Ovary (tissue), 10 donors: ENCODE measurements at regions of chr5 and their contacts with region 1.

Region 1: DNA sequence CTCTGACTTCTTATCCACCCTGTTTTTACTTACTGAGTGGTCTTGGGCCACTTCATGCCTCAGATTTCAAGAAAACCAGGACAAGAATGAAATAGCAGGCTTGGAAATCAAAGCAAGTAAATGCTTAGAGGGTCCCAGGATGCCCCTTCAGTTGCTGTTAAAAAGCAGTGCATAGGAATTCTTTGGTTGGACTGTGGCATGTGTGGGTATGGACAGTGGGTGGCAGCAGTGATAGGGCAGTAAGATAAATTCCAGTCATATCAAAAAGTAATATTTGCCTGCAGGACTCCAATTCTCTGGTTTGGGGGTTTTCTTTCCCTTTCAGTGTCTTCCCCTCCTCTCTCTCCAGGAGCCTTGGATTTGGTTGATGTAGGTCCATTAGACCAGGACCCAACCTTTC is 306.7 kb upstream of the CLINT1 start:
- DNase-seq: no peak
- H3K4me3 ChIP-seq: no peak overlapping the region
- H3K27ac ChIP-seq: no peak overlapping the region
- H3K4me1 ChIP-seq: no peaks in the 10 kb centered on the region
- H3K27me3 ChIP-seq: no peaks in the 10 kb centered on the region
- CTCF ChIP-seq: no peak
- EP300 ChIP-seq: no peak
- POLR2A ChIP-seq: no peak

Region 2: DNA sequence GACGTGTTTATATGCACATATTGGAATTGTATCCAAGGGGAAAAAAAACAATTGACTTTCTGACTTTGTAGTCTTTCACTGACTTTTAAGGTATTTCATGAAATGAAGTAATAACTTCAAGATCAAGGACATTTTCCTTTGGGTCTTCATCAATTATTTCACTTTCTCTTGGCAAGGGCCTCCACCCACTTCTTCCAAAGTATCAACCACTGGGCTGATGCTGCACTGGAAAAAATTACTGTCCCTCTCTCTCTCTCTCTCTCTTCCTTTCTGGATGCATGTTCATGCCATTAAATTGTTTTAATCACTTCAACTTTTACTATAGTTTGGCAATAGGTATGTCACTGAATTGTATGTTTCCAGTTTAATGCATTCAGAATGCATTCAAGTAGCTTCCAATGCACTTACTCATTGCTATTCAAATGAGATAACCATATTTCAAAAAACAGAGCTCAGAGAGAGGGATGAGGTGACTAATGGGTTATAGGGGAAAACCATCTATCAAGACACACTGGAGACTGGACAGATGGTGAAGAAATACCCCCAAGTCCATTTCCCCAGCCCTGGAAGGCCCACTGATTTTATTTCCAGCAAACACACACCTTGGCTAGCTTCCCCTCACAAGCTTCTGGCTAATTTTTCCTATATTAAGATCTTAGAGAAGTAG is 348.8 kb after region 1 on chr5:
- intact Hi-C with region 1: no loop called
- DNase-seq: no peak
- H3K4me3 ChIP-seq: no peak overlapping the region
- H3K27ac ChIP-seq: no peak overlapping the region
- H3K4me1 ChIP-seq: no peaks in the 10 kb centered on the region
- H3K27me3 ChIP-seq: no peaks in the 10 kb centered on the region
- CTCF ChIP-seq: no peak
- EP300 ChIP-seq: no peak
- POLR2A ChIP-seq: no peak

Region 3: DNA sequence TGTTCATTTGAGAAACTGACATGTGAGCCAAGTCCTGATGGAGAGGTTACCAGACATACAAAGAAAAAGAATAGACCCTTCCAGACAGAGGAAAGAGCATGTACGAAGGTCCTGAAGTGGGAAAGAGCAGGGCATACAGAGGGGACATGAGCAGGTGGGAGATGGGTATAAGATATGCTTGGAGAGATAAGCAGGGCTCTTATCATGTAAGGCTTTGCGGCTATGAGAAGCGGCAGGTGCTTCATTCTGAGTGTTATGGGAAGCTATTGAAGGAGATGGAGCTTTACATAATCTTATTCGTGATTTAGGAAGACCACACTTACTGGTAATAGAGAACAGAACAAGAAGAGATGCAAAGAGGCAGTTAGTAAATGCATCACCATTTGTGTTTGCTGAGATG is 517.0 kb after region 1 on chr5:
- intact Hi-C with region 1: loop called in 1 of 4 experiments (anchors 10 kb)
- DNase-seq: no peak
- H3K4me3 ChIP-seq: no peak overlapping the region
- H3K27ac ChIP-seq: no peak overlapping the region
- H3K4me1 ChIP-seq: no peaks in the 10 kb centered on the region
- H3K27me3 ChIP-seq: no peaks in the 10 kb centered on the region
- CTCF ChIP-seq: no peak
- EP300 ChIP-seq: no peak
- POLR2A ChIP-seq: no peak